Mammary epithelial cell (primary cell): ENCODE measurements at regions of chr3 and their contacts with region 1.

Region 1: GRCh38 chr3:129490242-129491045 is 38.0 kb upstream of the RHO start:
- DNase-seq: peak; percentile 79
- H3K4me3 ChIP-seq: no peak overlapping the region
- H3K27ac ChIP-seq: no peak overlapping the region
- H3K4me1 ChIP-seq: peaks cover 31% of the 10 kb centered on the region
- H3K27me3 ChIP-seq: no peaks in the 10 kb centered on the region
- CTCF ChIP-seq: peak; percentile 83 to 94

Region 2: GRCh38 chr3:129439817-129440617 is 50.4 kb before region 1 on chr3 and contains the starts of genes IFT122 and MBD4:
- CTCF ChIA-PET with region 1: no interaction called
- dilution Hi-C with region 1: loop called (anchors 5 kb)
- in situ Hi-C with region 1: no loop called
- intact Hi-C with region 1: loop called (anchors 2 kb)
- DNase-seq: peak; percentile 100
- H3K4me3 ChIP-seq: peak within 1 kb of the TSS; percentile 72 to 89 (median 78)
- H3K27ac ChIP-seq: peak within 1 kb of the TSS; percentile 80
- H3K4me1 ChIP-seq: peaks cover 20% of the 10 kb centered on the region
- H3K27me3 ChIP-seq: no peaks in the 10 kb centered on the region
- CTCF ChIP-seq: no peak
- total RNA-seq, gene IFT122: 14.7 to 17.2 TPM
- total RNA-seq, gene MBD4: 35.0 to 35.8 TPM

Region 3: DNA sequence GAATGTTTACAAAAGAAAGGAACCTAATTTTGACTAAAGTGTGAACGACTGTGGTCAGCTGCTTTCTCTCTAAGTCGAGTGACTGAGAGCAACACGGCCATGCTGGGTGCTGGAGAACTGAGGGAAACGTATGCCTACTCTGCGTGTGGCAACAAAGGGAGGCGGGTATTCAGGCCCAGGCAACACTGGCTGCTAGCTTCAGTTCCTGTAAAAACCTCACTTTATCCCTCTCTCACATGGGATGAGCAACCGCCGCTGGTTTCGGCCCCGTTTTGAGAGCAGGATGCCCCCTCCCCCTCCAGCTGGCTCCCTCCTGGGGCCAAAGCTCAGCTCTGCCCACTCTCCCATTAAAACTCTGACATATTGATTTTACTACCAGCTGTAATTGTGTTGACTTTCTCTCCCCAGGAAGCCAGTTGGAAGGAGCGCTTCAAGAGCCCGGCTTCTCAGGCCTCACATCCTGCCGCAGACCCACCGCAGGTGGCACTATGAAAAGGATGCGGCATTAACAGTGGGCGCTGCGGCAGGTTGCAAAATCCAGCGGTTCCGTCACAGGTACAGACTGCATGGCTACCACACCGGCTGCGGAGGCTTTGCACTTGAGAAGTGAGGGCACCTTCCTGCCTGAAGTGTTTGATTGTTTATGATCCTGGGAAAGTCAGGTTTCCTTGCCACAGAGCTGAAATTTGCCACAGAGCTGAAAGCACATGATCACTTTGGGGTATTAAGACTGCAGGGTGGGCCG is 103.3 kb after region 1 on chr3:
- CTCF ChIA-PET with region 1: no interaction called
- dilution Hi-C with region 1: loop called (anchors 5 kb)
- in situ Hi-C with region 1: no loop called
- intact Hi-C with region 1: no loop called
- DNase-seq: no peak
- H3K4me3 ChIP-seq: no peak overlapping the region
- H3K27ac ChIP-seq: no peak overlapping the region
- H3K4me1 ChIP-seq: no peaks in the 10 kb centered on the region
- H3K27me3 ChIP-seq: no peaks in the 10 kb centered on the region
- CTCF ChIP-seq: no peak

Region 4: DNA sequence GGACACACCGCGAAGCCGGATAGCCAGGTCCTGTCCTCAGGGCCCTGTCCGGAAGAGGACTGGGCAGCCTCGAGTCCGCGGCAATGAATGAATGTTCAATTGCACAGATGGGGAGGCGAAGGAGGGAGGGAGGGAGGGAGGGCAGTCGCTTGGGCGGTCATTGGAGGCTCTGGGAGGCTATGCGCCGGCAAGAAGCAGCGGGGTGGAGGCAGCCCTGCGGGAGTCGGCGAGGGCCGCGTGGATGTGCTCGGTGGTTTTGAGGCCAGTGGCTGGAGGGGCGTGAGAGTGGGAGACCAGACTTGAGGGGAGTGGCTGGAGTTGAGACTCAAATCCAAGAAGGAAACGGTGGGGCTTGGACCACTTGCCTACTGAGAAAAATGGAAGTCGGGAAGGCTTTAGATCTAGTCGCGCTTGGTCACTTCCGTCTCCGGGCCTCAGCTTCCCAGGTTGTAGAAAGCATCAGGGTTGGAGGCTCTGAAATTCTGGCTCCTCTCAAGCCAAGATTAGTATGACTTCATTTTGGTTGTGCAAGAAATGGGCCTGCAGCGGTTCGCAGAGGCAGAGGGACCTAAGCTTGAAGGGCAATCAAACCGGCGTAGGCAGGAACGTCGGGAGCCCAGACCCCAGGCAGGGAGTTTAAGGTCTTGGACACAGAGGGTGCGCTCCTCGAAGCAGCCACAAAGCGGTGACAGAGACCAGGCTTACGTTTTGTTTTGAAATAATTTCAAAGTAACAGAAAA is 137.2 kb after region 1 on chr3:
- CTCF ChIA-PET with region 1: no interaction called
- dilution Hi-C with region 1: no loop called
- in situ Hi-C with region 1: no loop called
- intact Hi-C with region 1: loop called (anchors 1 kb)
- DNase-seq: peak; percentile 73
- H3K4me3 ChIP-seq: peak overlapping the region; percentile 31 to 56 (median 43)
- H3K27ac ChIP-seq: peak overlapping the region; percentile 41
- H3K4me1 ChIP-seq: peaks cover 25% of the 10 kb centered on the region
- H3K27me3 ChIP-seq: no peaks in the 10 kb centered on the region
- CTCF ChIP-seq: peak; percentile 75 to 82

Region 5: GRCh38 chr3:129824926-129825541 is 334.6 kb after region 1 on chr3:
- CTCF ChIA-PET with region 1: interaction called, 6 read pairs
- dilution Hi-C with region 1: no loop called
- in situ Hi-C with region 1: loop called in 1 of 2 experiments (anchors 10 kb)
- intact Hi-C with region 1: loop called (anchors 1 kb)
- DNase-seq: peak; percentile 29
- H3K4me3 ChIP-seq: no peak overlapping the region
- H3K27ac ChIP-seq: no peak overlapping the region
- H3K4me1 ChIP-seq: peaks cover 5% of the 10 kb centered on the region
- H3K27me3 ChIP-seq: no peaks in the 10 kb centered on the region
- CTCF ChIP-seq: peak; percentile 52 to 70

Region 6: GRCh38 chr3:129942296-129942695 is 451.9 kb after region 1 on chr3:
- CTCF ChIA-PET with region 1: interaction called, 4 read pairs
- dilution Hi-C with region 1: no loop called
- in situ Hi-C with region 1: loop called in 1 of 2 experiments (anchors 25 kb)
- intact Hi-C with region 1: no loop called
- DNase-seq: peak; percentile 38
- H3K4me3 ChIP-seq: no peak overlapping the region
- H3K27ac ChIP-seq: no peak overlapping the region
- H3K4me1 ChIP-seq: no peaks in the 10 kb centered on the region
- H3K27me3 ChIP-seq: no peaks in the 10 kb centered on the region
- CTCF ChIP-seq: peak; percentile 65 to 77